Dendritic cell treated with granulocyte-macrophage colony-stimulating factor and Interleukin-4, amounts not matched to agents 40 ng/mL and 50 ng/mL, for 4 days (primary cell): ENCODE measurements at regions of chr1 and their contacts with region 1.

Region 1: DNA sequence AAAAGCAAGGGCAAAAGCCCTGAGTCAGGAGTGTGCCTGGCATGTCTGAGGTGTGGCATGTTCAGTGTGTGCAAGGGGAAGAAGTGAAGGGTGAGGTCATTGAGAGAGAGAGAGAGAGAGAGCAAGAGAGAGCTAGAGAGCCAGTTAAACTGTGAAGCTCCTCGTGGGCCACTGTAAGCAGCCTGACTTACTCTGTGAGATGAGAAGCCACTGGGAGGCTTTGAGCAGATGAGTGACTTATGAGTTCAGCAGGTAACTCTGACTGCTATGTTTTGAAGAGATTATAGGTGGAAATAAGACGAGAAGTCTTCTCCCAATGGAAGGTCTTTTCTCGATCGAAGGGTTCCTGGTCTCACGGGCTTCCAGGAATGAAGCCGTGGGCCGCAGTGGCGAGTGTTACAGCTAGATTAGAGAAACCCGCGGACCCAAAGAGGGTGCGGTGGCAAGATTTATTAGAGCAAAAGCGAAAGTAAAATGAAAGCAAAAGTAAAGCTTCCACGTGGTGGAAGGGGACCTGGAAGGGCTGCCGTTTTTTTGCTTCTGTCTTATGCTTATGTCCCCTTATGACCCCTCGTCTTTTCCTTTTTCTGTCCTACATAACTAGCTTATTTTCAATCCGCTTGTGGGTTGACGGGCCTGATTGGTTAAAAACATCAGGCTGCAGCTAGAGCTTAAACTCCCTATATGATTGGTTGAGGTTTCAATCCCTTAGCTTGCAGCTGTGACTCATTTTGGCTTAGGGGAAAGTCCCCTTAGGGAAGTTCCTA is 323.1 kb upstream of the FAM78B start:
- H3K4me3 Mint-ChIP-seq: no peak overlapping the region
- H3K27ac Mint-ChIP-seq: no peak overlapping the region
- H3K4me1 Mint-ChIP-seq: peaks cover 6% of the 10 kb centered on the region
- H3K27me3 Mint-ChIP-seq: no peaks in the 10 kb centered on the region

Region 2: GRCh38 chr1:165630629-165631341 is 859.1 kb before region 1 on chr1 and contains the start of gene MGST3:
- intact Hi-C with region 1: loop called (anchors 5 kb)
- H3K4me3 Mint-ChIP-seq: no peak within 1 kb of the TSS
- H3K27ac Mint-ChIP-seq: no peak within 1 kb of the TSS
- H3K4me1 Mint-ChIP-seq: peaks cover 22% of the 10 kb centered on the region
- H3K27me3 Mint-ChIP-seq: no peaks in the 10 kb centered on the region

Region 3: DNA sequence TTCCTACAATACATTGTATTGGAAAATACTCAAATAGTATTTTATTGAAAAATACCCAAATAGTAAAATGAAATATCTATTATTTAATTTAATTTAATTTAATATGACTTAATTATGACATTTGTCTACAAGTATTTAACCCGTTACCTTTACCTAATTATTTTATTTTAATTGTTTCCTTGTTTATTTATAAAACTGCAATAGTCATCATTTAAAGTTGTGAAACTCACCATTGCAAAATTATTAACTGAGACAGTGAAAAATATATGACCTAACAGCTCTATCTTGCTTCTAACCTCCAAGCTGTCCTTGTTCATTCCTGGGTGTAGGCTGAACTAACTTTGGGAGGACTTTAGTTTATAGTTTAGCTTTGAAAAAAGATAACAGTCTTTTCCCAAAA is 48.8 kb after region 1 on chr1:
- intact Hi-C with region 1: no loop called
- H3K4me3 Mint-ChIP-seq: no peak overlapping the region
- H3K27ac Mint-ChIP-seq: no peak overlapping the region
- H3K4me1 Mint-ChIP-seq: no peaks in the 10 kb centered on the region
- H3K27me3 Mint-ChIP-seq: no peaks in the 10 kb centered on the region